Activated T-helper 1 cell treated with anti-CD3 and anti-CD28 coated beads, Interleukin-12 subunit alpha, Interleukin-12 subunit beta, Interleukin-2, Interleukin-4 antibody, amounts not matched to agents 30 ng/mL and 10 ng/mL and 1 ng/mL, durations not matched to agents 14 hours and 24 hours and 36 hours (primary cell): ENCODE measurements at regions of chr5 and their contacts with region 1.

Region 1: GRCh38 chr5:95961617-95962474 is at the start of gene ELL2:
- DNase-seq: peak; percentile 96
- H3K4me3 Mint-ChIP-seq: peak within 1 kb of the TSS; percentile 100
- H3K27ac Mint-ChIP-seq: peak within 1 kb of the TSS; percentile 99
- H3K4me1 Mint-ChIP-seq: peaks cover 55% of the 10 kb centered on the region
- H3K27me3 Mint-ChIP-seq: no peaks in the 10 kb centered on the region
- total RNA-seq, gene ELL2: 93.9 and 97.6 TPM in 2 replicates

Region 2: GRCh38 chr5:94347130-94347529 is 1614.7 kb before region 1 on chr5:
- intact Hi-C with region 1: no loop called
- DNase-seq: no peak
- H3K4me3 Mint-ChIP-seq: no peak overlapping the region
- H3K27ac Mint-ChIP-seq: no peak overlapping the region
- H3K4me1 Mint-ChIP-seq: peaks cover 8% of the 10 kb centered on the region
- H3K27me3 Mint-ChIP-seq: no peaks in the 10 kb centered on the region

Region 3: GRCh38 chr5:95858661-95859326 is 103.1 kb before region 1 on chr5:
- intact Hi-C with region 1: loop called (anchors 1 kb)
- DNase-seq: peak; percentile 84
- H3K4me3 Mint-ChIP-seq: peak overlapping the region; percentile 47
- H3K27ac Mint-ChIP-seq: peak overlapping the region; percentile 66
- H3K4me1 Mint-ChIP-seq: peaks cover 58% of the 10 kb centered on the region
- H3K27me3 Mint-ChIP-seq: no peaks in the 10 kb centered on the region

Region 4: GRCh38 chr5:95949810-95950209 is 12.0 kb before region 1 on chr5:
- intact Hi-C with region 1: loop called (anchors 1 kb)
- DNase-seq: no peak
- H3K4me3 Mint-ChIP-seq: peak overlapping the region; percentile 24
- H3K27ac Mint-ChIP-seq: no peak overlapping the region
- H3K4me1 Mint-ChIP-seq: peaks cover 73% of the 10 kb centered on the region
- H3K27me3 Mint-ChIP-seq: no peaks in the 10 kb centered on the region

Region 5: GRCh38 chr5:96177303-96177869 is 215.5 kb after region 1 on chr5:
- intact Hi-C with region 1: no loop called
- DNase-seq: no peak
- H3K4me3 Mint-ChIP-seq: no peak overlapping the region
- H3K27ac Mint-ChIP-seq: no peak overlapping the region
- H3K4me1 Mint-ChIP-seq: no peaks in the 10 kb centered on the region
- H3K27me3 Mint-ChIP-seq: no peaks in the 10 kb centered on the region

Region 6: DNA sequence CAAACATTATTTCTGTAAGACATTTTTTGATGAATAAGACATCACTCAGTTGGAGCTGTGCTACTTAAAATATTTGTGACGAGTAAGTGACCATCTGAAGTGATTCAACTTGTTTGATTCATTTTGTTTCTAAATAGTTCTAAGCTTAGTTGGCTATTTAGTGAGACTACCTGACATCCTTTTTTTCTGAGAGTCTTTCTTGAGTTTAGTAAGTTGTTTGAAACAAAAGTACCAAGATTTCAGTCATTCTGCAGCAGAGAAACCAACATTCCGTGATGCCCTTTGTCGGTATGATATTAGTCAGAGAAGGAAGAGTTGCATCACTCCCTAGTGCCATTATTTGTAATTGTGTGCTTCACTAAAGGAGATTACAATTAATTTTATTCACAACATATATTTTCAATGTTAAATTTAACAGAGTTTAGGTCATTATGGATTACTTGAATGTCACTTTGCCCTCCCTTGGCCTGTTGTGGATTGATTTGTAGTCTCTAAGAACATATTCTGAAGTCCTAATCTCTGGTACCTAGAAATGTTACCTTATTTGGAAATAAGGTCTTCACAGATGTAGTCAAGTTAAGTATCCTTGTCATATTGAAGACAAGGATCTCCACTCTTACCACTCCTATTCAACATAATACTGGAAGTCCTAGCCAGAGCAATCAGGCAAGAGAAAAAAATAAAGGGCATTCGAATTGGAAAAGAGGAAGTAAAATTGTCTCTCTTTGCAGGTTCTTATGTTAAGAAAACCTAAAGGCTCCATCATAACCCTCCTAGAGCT is 259.0 kb after region 1 on chr5:
- intact Hi-C with region 1: loop called (anchors 2 kb)
- DNase-seq: no peak
- H3K4me3 Mint-ChIP-seq: no peak overlapping the region
- H3K27ac Mint-ChIP-seq: peak overlapping the region; percentile 81
- H3K4me1 Mint-ChIP-seq: peaks cover 13% of the 10 kb centered on the region
- H3K27me3 Mint-ChIP-seq: peaks cover 1% of the 10 kb centered on the region

Region 7: GRCh38 chr5:96601811-96602244 is 640.0 kb after region 1 on chr5:
- intact Hi-C with region 1: loop called (anchors 5 kb)
- DNase-seq: peak; percentile 29
- H3K4me3 Mint-ChIP-seq: no peak overlapping the region
- H3K27ac Mint-ChIP-seq: no peak overlapping the region
- H3K4me1 Mint-ChIP-seq: peaks cover 17% of the 10 kb centered on the region
- H3K27me3 Mint-ChIP-seq: peaks cover 13% of the 10 kb centered on the region